Activated naive CD4-positive, alpha-beta T cell treated with anti-CD3 and anti-CD28 coated beads for 36 hours (primary cell): ENCODE measurements at regions of chr9 and their contacts with region 1.

Region 1: DNA sequence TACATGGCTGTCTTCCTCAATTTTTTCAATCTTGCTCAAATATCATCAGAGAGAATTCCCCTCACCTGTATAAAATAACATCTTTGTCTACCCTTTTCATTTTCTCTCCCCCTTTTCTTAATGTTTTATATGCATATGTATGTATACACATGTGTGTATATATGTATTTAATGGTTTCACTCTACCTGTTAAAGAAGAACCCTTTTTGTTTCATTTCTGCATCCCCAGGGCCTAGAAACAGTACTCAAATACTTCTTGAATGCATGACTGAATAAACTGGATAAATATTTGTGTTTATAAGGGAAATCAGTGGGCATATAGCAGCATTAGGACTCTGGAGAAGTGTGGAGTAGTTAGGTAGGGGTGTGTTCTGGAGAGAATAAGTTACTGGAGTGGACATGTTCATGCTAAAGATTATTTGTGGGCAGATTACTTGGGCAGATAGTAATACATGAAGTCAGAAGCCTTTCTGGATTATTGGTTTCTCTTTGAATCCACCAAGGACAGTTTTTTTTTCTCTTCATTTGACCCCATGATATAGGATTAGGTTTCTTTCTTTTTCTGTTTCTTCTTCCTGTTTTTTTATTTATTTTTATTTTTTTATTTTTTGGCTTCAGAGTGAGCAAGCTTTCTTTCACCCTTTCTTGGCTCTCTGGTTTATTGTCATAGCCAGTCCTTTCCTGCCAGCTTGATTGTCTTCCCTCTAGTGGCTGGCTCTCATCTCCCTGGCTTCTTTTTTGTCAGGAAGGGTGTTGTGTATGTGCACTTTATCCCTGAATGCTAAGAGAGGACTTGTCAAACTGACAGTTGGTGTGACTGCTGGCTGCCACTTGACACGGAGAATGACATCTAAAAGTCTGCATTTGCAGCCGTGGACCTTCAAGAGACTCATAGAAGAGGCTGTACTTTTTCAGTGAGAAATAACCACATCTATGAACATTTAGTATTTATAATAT is 89.3 kb downstream of the ZCCHC7 start:
- DNase-seq: no peak
- H3K4me3 Mint-ChIP-seq: no peak overlapping the region
- H3K27ac Mint-ChIP-seq: no peak overlapping the region
- H3K4me1 Mint-ChIP-seq: peaks cover 36% of the 10 kb centered on the region
- H3K27me3 Mint-ChIP-seq: no peaks in the 10 kb centered on the region

Region 2: GRCh38 chr9:36118706-36119105 is 1091.0 kb before region 1 on chr9:
- CTCF ChIA-PET with region 1: no interaction called
- intact Hi-C with region 1: no loop called
- DNase-seq: no peak
- H3K4me3 Mint-ChIP-seq: no peak overlapping the region
- H3K27ac Mint-ChIP-seq: no peak overlapping the region
- H3K4me1 Mint-ChIP-seq: no peaks in the 10 kb centered on the region
- H3K27me3 Mint-ChIP-seq: no peaks in the 10 kb centered on the region

Region 3: DNA sequence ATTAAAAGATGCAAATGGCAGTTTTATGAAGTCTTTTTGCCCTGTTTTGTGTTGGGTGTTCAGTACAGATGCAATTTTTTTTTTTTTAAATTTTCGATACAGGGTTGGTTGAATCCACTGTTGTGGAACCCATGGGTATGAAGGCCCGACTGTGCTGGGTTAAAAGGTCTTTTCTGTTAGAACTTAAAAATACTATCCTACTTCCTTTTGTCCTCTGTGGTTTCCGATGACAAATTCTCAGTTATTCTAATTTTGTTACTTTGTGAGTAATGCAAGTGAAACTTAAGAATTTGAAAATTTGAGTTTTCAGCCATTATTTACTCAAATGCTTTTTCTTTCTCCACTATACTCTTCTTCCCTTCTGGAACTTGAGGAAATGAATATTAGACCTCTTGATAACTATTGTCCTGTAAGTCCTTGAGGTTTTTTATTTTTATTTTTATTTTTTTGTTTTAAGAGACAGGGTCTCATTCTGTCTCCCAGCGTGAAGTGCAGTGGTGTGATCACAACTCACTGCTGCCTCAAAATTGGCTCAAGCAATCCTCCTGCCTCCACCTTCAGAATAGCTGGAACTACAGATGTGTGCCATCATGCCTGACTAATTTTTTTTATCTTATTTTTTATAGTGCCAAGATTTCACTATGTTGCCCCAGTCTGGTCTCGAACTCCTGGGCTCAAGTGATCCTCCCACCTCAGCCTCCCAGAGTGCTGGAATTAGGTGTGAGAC is 21.8 kb before region 1 on chr9:
- CTCF ChIA-PET with region 1: no interaction called
- intact Hi-C with region 1: loop called (anchors 1 kb)
- DNase-seq: peak; percentile 18
- H3K4me3 Mint-ChIP-seq: no peak overlapping the region
- H3K27ac Mint-ChIP-seq: peak overlapping the region; percentile 85
- H3K4me1 Mint-ChIP-seq: peaks cover 52% of the 10 kb centered on the region
- H3K27me3 Mint-ChIP-seq: no peaks in the 10 kb centered on the region

Region 4: GRCh38 chr9:37197158-37198038 is 12.3 kb before region 1 on chr9:
- CTCF ChIA-PET with region 1: interaction called, 3 read pairs
- intact Hi-C with region 1: loop called (anchors 1 kb)
- DNase-seq: peak; percentile 27
- H3K4me3 Mint-ChIP-seq: peak overlapping the region; percentile 19
- H3K27ac Mint-ChIP-seq: peak overlapping the region; percentile 82
- H3K4me1 Mint-ChIP-seq: peaks cover 70% of the 10 kb centered on the region
- H3K27me3 Mint-ChIP-seq: no peaks in the 10 kb centered on the region

Region 5: GRCh38 chr9:37220971-37221370 is 11.3 kb after region 1 on chr9:
- CTCF ChIA-PET with region 1: no interaction called
- intact Hi-C with region 1: loop called (anchors 1 kb)
- DNase-seq: no peak
- H3K4me3 Mint-ChIP-seq: no peak overlapping the region
- H3K27ac Mint-ChIP-seq: no peak overlapping the region
- H3K4me1 Mint-ChIP-seq: peaks cover 25% of the 10 kb centered on the region
- H3K27me3 Mint-ChIP-seq: no peaks in the 10 kb centered on the region

Region 6: GRCh38 chr9:37293664-37294524 is 84.2 kb after region 1 on chr9:
- CTCF ChIA-PET with region 1: interaction called, 3 read pairs
- intact Hi-C with region 1: loop called (anchors 2 kb)
- DNase-seq: no peak
- H3K4me3 Mint-ChIP-seq: no peak overlapping the region
- H3K27ac Mint-ChIP-seq: peak overlapping the region; percentile 81
- H3K4me1 Mint-ChIP-seq: peaks cover 72% of the 10 kb centered on the region
- H3K27me3 Mint-ChIP-seq: no peaks in the 10 kb centered on the region

Region 7: GRCh38 chr9:37302277-37302676 is 92.6 kb after region 1 on chr9:
- CTCF ChIA-PET with region 1: interaction called, 3 read pairs
- intact Hi-C with region 1: loop called (anchors 1 kb)
- DNase-seq: peak; percentile 70
- H3K4me3 Mint-ChIP-seq: peak overlapping the region; percentile 25
- H3K27ac Mint-ChIP-seq: peak overlapping the region; percentile 92
- H3K4me1 Mint-ChIP-seq: peaks cover 59% of the 10 kb centered on the region
- H3K27me3 Mint-ChIP-seq: no peaks in the 10 kb centered on the region

Region 8: DNA sequence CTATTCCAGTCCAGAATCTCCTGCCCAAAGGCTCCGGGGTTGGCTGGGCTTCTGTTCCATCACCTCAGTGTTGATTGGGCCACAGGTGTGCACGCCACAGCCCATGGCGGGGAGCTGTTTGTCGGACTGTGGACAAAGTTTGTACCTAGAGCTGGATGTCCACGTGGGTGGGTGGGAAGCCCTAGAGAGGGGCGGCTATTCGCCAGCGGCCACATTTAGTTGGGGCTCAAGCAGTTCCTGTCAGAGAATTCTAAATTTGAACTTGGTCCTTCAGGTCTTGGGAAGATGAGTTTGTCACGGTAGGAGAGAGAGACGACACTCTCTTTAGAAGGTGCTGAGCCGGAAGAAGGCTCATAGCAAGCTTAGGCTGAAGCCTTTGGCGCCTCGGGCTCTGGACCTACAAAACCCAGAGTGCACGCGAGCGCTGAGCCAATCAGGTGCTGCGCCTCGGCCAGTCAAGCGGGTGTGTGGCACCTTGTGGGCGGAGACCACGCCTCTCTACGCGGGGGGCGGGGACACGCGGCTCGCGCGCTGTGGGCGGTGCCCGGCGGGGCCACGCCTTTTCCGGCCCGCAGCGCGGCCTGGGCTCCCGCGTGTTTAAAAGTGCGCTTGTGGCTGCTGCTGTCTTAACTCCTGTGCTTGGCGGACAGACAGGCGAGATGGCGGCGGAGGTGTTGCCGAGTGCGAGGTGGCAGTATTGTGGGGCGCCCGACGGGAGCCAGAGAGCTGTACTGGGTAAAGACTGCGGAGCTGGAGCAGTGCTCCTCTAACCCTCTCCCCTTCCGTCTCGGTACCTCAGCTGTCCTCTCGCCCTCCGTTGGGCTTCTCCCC is 275.9 kb after region 1 on chr9 and contains the start of gene POLR1E:
- CTCF ChIA-PET with region 1: no interaction called
- intact Hi-C with region 1: no loop called
- DNase-seq: peak; percentile 97
- H3K4me3 Mint-ChIP-seq: peak within 1 kb of the TSS; percentile 99
- H3K27ac Mint-ChIP-seq: peak within 1 kb of the TSS; percentile 85
- H3K4me1 Mint-ChIP-seq: peaks cover 39% of the 10 kb centered on the region
- H3K27me3 Mint-ChIP-seq: peaks cover 6% of the 10 kb centered on the region
- total RNA-seq, gene POLR1E: 60.7 to 62.9 TPM

Region 9: DNA sequence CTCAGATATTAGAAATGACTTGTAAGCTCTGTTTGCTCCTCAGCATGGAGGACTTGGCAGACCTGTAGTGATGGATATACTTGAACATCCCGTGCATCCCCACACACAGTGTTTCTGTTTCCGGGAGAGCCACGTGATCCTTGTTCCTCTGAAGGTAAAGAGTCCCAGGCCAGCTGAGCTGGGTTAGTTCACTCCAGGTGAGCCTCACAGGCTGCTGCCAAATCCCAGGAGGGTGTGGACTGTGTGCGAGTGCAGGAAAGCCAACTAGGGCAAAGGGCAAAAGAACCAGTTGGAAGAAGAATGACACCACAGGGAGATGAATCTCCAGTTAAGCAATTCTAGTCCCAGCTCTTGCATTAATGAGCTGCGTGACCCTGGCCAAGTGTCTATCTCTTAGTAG is 393.1 kb after region 1 on chr9:
- CTCF ChIA-PET with region 1: no interaction called
- intact Hi-C with region 1: no loop called
- DNase-seq: no peak
- H3K4me3 Mint-ChIP-seq: no peak overlapping the region
- H3K27ac Mint-ChIP-seq: no peak overlapping the region
- H3K4me1 Mint-ChIP-seq: no peaks in the 10 kb centered on the region
- H3K27me3 Mint-ChIP-seq: peaks cover 12% of the 10 kb centered on the region